Endothelial cell of umbilical vein (primary cell): ENCODE measurements at regions of chr19 and their contacts with region 1.

Region 1: DNA sequence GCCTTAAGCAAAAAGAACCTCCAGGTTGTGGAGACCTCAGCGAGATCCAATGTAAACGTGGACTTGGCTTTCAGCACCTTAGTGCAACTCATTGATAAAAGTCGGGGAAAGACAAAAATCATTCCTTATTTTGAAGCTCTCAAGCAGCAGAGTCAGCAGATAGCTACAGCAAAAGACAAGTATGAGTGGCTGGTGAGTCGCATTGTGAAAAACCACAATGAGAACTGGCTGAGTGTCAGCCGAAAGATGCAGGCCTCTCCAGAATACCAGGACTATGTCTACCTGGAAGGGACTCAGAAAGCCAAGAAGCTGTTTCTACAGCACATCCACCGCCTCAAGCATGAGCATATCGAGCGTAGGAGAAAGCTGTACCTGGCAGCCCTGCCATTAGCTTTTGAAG is 58.5 kb downstream of the ARHGAP35 start:
- DNase-seq: no peak
- H3K4me3 ChIP-seq: no peak overlapping the region
- H3K27ac ChIP-seq: no peak overlapping the region
- H3K4me1 ChIP-seq: peaks cover 10% of the 10 kb centered on the region
- H3K27me3 ChIP-seq: no peaks in the 10 kb centered on the region
- CTCF ChIP-seq: no peak
- POLR2A ChIP-seq: no peak

Region 2: GRCh38 chr19:46904114-46905060 is 14.9 kb before region 1 on chr19:
- CTCF ChIA-PET with region 1: interaction called, 11 read pairs
- POLR2A ChIA-PET with region 1: no interaction called
- dilution Hi-C with region 1: no loop called
- intact Hi-C with region 1: no loop called
- DNase-seq: peak; percentile 49
- H3K4me3 ChIP-seq: no peak overlapping the region
- H3K27ac ChIP-seq: peak overlapping the region; percentile 27
- H3K4me1 ChIP-seq: peaks cover 30% of the 10 kb centered on the region
- H3K27me3 ChIP-seq: no peaks in the 10 kb centered on the region
- CTCF ChIP-seq: no peak
- POLR2A ChIP-seq: no peak